Right ventricle myocardium inferior (tissue), 1 donor: ENCODE measurements at regions of chr3 and their contacts with region 1.

Region 1: GRCh38 chr3:173003471-173003870 is 137.6 kb downstream of the SPATA16 start:
- DNase-seq: no peak
- ATAC-seq: no peak

Region 2: GRCh38 chr3:173037840-173038483 is 34.5 kb after region 1 on chr3:
- intact Hi-C with region 1: loop called (anchors 5 kb)
- DNase-seq: no peak
- ATAC-seq: no peak

Region 3: GRCh38 chr3:174035328-174035886 is 1031.9 kb after region 1 on chr3:
- intact Hi-C with region 1: no loop called
- DNase-seq: no peak
- ATAC-seq: no peak